ENCODE measurements at regions of chr11 and their contacts with region 1.

Region 1: DNA sequence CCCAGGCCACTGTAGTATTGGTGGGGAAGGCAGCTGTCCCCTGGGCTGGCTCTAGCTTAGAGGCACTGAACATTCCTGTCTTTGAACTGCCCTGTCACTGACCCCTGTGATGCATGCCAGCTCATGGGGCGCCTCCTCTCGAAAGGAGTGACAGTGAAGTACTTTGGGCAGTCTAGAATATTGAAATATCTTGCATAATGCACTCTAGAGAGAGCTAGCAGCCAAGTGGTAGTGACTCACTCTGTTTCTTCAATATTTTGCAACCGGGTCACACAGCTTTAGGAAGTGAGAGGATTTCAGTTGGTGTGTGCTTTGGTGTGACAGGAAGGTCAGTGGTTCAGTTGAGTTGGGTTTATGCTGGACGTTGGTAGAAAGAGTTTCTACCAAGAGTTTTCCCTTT is 35.5 kb upstream of the ST14 start:
- DNase-seq: peak; percentile 40 to 84 (median 80)
- ATAC-seq: peak; percentile 63 to 97 (median 92)
- H3K4me3 ChIP-seq: no peak overlapping the region
- H3K27ac ChIP-seq: peak overlapping the region in 10 of 12 donors; percentile 27 to 63 (median 36)
- H3K4me1 ChIP-seq: peaks cover 0 to 75% (median 21%) of the 10 kb centered on the region in 12 donors
- H3K27me3 ChIP-seq: no peaks in the 10 kb centered on the region
- CTCF ChIP-seq: no peak
- POLR2A ChIP-seq: no peak

Region 2: GRCh38 chr11:129992161-129992944 is 131.7 kb before region 1 on chr11:
- intact Hi-C with region 1: loop called in 1 of 10 experiments (anchors 5 kb)
- DNase-seq: no peak
- ATAC-seq: peak in 3 of 4 donors; percentile 54 to 72 (median 57)
- H3K4me3 ChIP-seq: no peak overlapping the region
- H3K27ac ChIP-seq: no peak overlapping the region
- H3K4me1 ChIP-seq: peaks cover 0 to 25% (median 12%) of the 10 kb centered on the region in 12 donors
- H3K27me3 ChIP-seq: no peaks in the 10 kb centered on the region
- CTCF ChIP-seq: peak in 7 of 12 donors; percentile 16 to 39 (median 33)
- POLR2A ChIP-seq: no peak

Region 3: GRCh38 chr11:130002846-130003716 is 121.0 kb before region 1 on chr11:
- intact Hi-C with region 1: loop called in 5 of 10 experiments (anchors 2 to 10 kb)
- DNase-seq: peak; percentile 95 to 97 (median 96)
- ATAC-seq: peak; percentile 90 to 95 (median 92)
- H3K4me3 ChIP-seq: peak overlapping the region; percentile 55 to 94 (median 80)
- H3K27ac ChIP-seq: peak overlapping the region; percentile 95 to 100 (median 100)
- H3K4me1 ChIP-seq: peaks cover 0 to 25% (median 19%) of the 10 kb centered on the region in 12 donors
- H3K27me3 ChIP-seq: no peaks in the 10 kb centered on the region
- CTCF ChIP-seq: no peak
- POLR2A ChIP-seq: peak; percentile 67 to 90

Region 4: DNA sequence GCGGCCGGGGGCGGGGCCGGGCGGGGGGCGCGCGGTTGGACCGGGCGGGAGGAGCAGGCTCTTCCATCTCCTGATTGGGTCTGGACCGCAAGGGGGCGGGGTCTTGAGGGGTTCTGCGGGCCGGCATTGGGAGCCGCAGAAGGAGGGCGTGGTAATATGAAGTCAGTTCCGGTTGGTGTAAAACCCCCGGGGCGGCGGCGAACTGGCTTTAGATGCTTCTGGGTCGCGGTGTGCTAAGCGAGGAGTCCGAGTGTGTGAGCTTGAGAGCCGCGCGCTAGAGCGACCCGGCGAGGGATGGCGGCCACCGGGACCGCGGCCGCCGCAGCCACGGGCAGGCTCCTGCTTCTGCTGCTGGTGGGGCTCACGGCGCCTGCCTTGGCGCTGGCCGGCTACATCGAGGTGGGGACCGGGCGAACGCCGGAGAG is 54.4 kb before region 1 on chr11 and contains the start of gene APLP2:
- intact Hi-C with region 1: loop called in 6 of 10 experiments (anchors 5 to 10 kb)
- DNase-seq: peak; percentile 99 to 100 (median 100)
- ATAC-seq: peak; percentile 94 to 98 (median 97)
- H3K4me3 ChIP-seq: peak within 1 kb of the TSS; percentile 59 to 99 (median 82)
- H3K27ac ChIP-seq: peak within 1 kb of the TSS; percentile 78 to 98 (median 95)
- H3K4me1 ChIP-seq: peaks cover 0 to 30% (median 20%) of the 10 kb centered on the region in 12 donors
- H3K27me3 ChIP-seq: no peaks in the 10 kb centered on the region
- CTCF ChIP-seq: no peak
- POLR2A ChIP-seq: peak; percentile 33 to 88
- total RNA-seq, gene APLP2: 215 to 423 (median 334) TPM

Measured in heart left ventricle (tissue), 16 donors.